Activated T-helper 2 cell treated with anti-CD3 and anti-CD28 coated beads, Interferon-gamma antibody, Interleukin-2, Interleukin-4, amounts not matched to agents 10 μg/mL and 5 μg/mL and 100 μg/mL, durations not matched to agents 14 hours and 24 hours and 36 hours (primary cell): ENCODE measurements at regions of chr12 and their contacts with region 1.

Region 1: GRCh38 chr12:6215932-6216494 is 15.8 kb downstream of the CD9 start:
- DNase-seq: no peak
- H3K4me3 Mint-ChIP-seq: no peak overlapping the region
- H3K27ac Mint-ChIP-seq: peak overlapping the region; percentile 61
- H3K4me1 Mint-ChIP-seq: peaks cover 40% of the 10 kb centered on the region
- H3K27me3 Mint-ChIP-seq: peaks cover 7% of the 10 kb centered on the region

Region 2: DNA sequence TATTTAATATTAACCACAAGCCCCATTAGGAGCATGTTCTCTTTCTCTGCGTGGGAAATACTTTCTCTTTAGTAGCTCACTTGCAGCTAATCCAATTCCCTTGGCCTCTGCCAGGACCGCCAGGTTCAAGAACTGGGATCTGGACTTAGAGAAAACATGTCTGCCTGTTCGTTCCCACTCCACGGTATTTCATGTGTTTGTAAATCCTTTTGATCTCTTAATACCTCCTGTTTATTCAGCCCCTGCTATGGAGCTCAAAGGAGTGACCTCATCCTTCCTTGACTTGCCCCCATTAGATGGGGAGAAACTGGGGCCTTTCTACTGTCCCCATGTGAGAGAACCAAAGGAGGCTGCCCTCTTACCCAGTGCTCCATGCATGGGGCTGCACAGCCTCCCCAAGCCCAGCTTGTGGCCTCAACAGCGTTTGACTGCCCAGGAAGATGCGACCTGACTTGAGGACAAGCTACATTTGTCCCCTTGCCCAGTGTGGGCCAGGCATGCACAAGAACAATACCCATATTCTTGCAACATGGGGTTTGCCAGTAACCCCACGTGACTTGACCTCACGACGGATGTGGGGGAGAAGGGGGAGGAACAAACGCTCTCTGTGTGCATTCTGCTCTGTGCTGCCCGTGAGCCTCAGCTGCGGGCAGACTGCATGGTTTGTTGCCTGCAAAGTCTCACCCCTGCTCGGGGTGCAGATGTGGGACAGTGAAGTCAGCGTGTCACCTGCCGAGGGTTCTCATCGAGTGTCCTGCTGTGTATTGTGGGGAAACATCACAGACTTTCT is 14.5 kb after region 1 on chr12:
- intact Hi-C with region 1: loop called (anchors 1 kb)
- DNase-seq: peak; percentile 72
- H3K4me3 Mint-ChIP-seq: peak overlapping the region; percentile 27
- H3K27ac Mint-ChIP-seq: peak overlapping the region; percentile 86
- H3K4me1 Mint-ChIP-seq: peaks cover 22% of the 10 kb centered on the region
- H3K27me3 Mint-ChIP-seq: no peaks in the 10 kb centered on the region

Region 3: DNA sequence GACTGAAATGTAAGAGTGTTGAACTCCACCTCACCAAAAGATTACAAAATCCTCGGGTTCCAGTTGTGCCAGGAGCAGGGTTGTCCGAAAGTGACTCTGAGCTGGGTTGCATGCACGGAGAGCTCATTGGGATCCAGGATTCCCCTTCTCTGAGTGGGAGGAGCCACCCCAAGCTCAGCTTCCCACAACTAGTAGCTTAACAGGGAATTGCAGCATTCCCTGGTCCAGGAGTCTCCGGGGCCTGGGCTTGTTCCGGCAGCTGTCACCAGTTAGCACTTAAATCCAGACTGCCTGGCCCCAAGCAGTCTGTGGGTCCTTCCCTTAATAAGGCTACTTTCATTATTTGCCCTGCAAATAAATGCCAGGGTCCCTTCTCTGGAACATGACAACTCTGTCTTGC is 34.3 kb after region 1 on chr12:
- intact Hi-C with region 1: no loop called
- DNase-seq: no peak
- H3K4me3 Mint-ChIP-seq: no peak overlapping the region
- H3K27ac Mint-ChIP-seq: no peak overlapping the region
- H3K4me1 Mint-ChIP-seq: no peaks in the 10 kb centered on the region
- H3K27me3 Mint-ChIP-seq: peaks cover 2% of the 10 kb centered on the region